Heart left ventricle (tissue), 16 donors: ENCODE measurements at regions of chr16 and their contacts with region 1.

Region 1: DNA sequence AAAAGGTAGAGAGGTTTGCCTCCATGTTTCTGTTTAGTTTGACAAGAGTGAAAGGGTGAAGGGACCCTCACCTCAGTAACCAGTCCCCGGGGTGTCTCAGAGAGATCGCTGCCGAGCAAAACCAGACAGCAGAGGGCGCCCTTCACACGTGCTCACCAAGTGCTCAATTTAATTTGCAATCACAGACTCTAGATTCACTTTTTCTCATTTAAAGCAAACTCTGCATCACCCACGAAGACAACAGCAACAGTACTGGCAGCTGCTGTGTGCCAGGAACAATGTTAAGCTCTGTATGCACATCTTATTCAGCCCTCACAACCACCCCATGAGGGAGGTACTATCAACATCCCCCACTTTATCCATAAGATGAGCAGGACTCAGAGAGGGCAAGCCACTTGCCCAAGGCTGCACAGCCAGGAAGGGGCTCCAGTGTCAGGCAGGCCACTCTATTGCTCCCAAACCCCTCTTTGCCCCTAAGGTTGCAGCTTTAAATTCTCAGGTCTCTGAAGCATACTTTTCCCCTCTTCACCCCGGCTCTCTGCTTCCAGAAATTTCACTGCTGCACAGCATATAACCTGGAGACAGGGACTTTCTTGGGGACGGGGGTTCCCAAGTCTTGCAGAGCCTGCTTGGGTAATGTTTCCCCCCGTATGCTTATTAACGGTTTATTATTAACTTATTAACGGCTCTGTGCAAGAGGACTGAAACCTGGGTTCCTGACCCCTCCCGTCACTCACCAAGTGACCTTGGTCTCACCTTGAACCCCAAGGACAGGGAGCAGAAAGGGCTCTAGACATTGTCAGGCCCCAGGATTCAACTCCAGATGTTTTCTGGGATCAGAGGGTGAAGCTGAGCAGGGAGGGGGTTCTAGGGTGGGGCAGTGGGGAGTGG is 70.9 kb downstream of the CNGB1 start:
- DNase-seq: peak; percentile 59 to 87 (median 70)
- ATAC-seq: peak; percentile 16 to 85 (median 74)
- H3K4me3 ChIP-seq: no peak overlapping the region
- H3K27ac ChIP-seq: no peak overlapping the region
- H3K4me1 ChIP-seq: peaks cover 0 to 15% (median 0%) of the 10 kb centered on the region in 12 donors
- H3K27me3 ChIP-seq: peaks cover 0 to 22% (median 5%) of the 10 kb centered on the region in 9 donors
- CTCF ChIP-seq: peak; percentile 77 to 96 (median 88)
- POLR2A ChIP-seq: no peak

Region 2: DNA sequence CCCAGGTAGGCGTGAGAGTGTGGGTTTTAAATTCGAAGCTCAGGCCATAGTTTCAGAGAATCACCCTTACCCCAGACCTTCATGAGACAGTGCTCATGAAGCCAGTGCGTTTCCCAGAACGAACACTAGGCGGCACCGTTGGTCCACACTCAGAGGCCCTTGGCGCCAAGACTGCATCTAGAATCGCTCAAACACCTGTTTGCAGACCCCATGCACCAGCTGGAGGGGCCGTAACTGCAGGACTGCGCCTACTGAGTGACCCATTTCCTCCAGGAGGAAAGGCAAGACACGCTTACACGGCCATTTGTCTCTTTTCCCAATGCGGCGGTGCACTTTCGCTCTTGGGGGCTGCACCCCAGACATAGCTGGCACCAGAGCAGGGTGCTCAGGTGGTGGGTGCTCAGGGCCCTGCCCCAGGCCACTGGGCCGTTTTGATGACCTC is 323.6 kb before region 1 on chr16:
- intact Hi-C with region 1: loop called in 1 of 10 experiments (anchors 10 kb)
- DNase-seq: peak; percentile 56 to 83 (median 68)
- ATAC-seq: peak; percentile 56 to 81 (median 78)
- H3K4me3 ChIP-seq: no peak overlapping the region
- H3K27ac ChIP-seq: peak overlapping the region in 1 of 12 donors; percentile 75
- H3K4me1 ChIP-seq: peaks cover 0 to 4% (median 0%) of the 10 kb centered on the region in 12 donors
- H3K27me3 ChIP-seq: peaks cover 0 to 17% (median 0%) of the 10 kb centered on the region in 9 donors
- CTCF ChIP-seq: peak; percentile 86 to 96 (median 93)
- POLR2A ChIP-seq: no peak

Region 3: GRCh38 chr16:57882792-57883191 is 17.2 kb before region 1 on chr16:
- intact Hi-C with region 1: no loop called
- DNase-seq: no peak
- ATAC-seq: no peak
- H3K4me3 ChIP-seq: no peak overlapping the region
- H3K27ac ChIP-seq: no peak overlapping the region
- H3K4me1 ChIP-seq: peaks cover 0 to 8% (median 0%) of the 10 kb centered on the region in 12 donors
- H3K27me3 ChIP-seq: peaks cover 0 to 52% (median 33%) of the 10 kb centered on the region in 9 donors
- CTCF ChIP-seq: no peak
- POLR2A ChIP-seq: no peak

Region 4: DNA sequence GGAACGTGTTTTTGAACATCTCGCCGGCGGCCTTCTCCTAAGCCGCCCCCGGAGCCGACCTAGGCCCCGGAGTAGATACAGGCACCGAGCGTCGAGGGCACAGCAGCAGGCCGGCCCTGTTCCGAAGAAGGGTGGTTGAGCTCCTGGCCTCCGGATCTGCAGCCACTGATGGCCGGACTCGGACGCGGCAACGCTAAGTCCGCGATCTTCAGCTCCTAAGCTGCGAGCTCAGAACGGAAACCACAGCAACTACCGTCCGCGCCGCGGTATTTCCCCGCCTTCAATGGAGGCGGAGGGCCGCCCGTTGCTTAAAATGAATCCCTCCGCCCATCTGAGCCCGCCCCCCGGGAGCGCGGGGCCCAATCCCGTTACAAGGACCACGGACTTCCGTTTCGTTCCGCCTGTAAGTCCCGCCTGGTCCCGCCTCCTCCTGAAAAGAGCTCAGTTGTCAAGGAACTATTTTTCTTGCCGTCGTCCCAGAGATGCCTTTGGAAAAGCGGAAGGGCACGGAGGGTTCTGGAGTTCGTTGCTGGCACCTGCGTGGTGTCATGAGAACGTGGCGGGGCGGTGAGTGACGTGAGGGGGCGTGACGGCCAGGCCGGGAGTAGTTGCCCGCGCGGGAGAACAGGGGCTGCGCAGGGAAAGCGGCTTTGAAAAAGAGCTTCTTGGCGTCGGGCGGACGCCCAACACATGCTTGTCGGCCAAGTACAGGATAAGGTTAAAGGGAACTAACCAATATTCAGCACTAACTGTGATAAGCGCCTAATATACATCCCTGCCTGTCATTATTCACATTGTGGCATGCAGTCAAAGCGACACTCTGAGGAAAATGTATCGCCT is 229.3 kb after region 1 on chr16 and contains the start of gene CFAP20:
- intact Hi-C with region 1: loop called in 5 of 10 experiments (anchors 5 to 10 kb)
- DNase-seq: peak; percentile 98 to 100 (median 99)
- ATAC-seq: peak; percentile 95 to 97 (median 97)
- H3K4me3 ChIP-seq: peak within 1 kb of the TSS; percentile 67 to 93 (median 85)
- H3K27ac ChIP-seq: peak within 1 kb of the TSS; percentile 37 to 95 (median 90)
- H3K4me1 ChIP-seq: peaks cover 0 to 50% (median 40%) of the 10 kb centered on the region in 12 donors
- H3K27me3 ChIP-seq: no peaks in the 10 kb centered on the region
- CTCF ChIP-seq: no peak
- POLR2A ChIP-seq: peak; percentile 76 to 97
- total RNA-seq, gene CFAP20: 30.7 to 57.5 (median 36.3) TPM

Region 5: GRCh38 chr16:58661199-58661830 is 761.3 kb after region 1 on chr16:
- intact Hi-C with region 1: loop called in 1 of 10 experiments (anchors 10 kb)
- DNase-seq: peak in 4 of 5 donors; percentile 43 to 78 (median 56)
- ATAC-seq: peak; percentile 78 to 92 (median 86)
- H3K4me3 ChIP-seq: no peak overlapping the region
- H3K27ac ChIP-seq: no peak overlapping the region
- H3K4me1 ChIP-seq: peaks cover 0 to 6% (median 0%) of the 10 kb centered on the region in 12 donors
- H3K27me3 ChIP-seq: no peaks in the 10 kb centered on the region
- CTCF ChIP-seq: peak; percentile 35 to 71 (median 58)
- POLR2A ChIP-seq: no peak